Heart right ventricle (tissue), 16 donors: ENCODE measurements at regions of chr10 and their contacts with region 1.

Region 1: DNA sequence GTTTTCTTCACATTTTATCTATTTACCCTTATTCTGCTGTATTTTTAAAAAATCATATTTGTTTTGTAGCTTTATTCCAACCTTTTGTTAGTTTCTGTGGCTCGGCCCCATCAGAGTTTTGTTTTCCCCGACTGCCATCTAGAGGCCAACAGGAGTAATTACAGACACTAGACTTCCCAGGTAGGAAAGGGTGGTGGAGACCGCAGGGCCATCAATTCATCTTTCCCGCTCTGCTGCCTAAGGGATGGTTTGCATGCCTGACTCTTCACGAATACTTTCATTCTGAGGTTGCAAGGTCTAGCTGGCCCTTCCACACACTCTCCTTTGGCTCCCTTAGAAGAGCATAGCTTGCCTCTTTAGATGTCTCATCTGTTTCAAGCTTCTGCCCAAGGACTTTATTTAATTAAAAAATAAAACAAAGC is 38.3 kb downstream of the LYZL2 start:
- DNase-seq: peak in 1 of 2 donors; percentile 19
- ATAC-seq: peak in 6 of 8 donors; percentile 42 to 72 (median 58)
- H3K4me3 ChIP-seq: no peak overlapping the region
- H3K27ac ChIP-seq: no peak overlapping the region
- H3K4me1 ChIP-seq: peaks cover 0 to 21% (median 0%) of the 10 kb centered on the region in 9 donors
- H3K27me3 ChIP-seq: peaks cover 0 to 5% (median 0%) of the 10 kb centered on the region in 7 donors
- CTCF ChIP-seq: peak; percentile 62 to 92 (median 81)

Region 2: GRCh38 chr10:30384701-30385201 is 206.5 kb before region 1 on chr10:
- intact Hi-C with region 1: loop called in 1 of 10 experiments (anchors 2 kb)
- DNase-seq: no peak
- ATAC-seq: peak in 4 of 8 donors; percentile 29 to 57 (median 44)
- H3K4me3 ChIP-seq: no peak overlapping the region
- H3K27ac ChIP-seq: no peak overlapping the region
- H3K4me1 ChIP-seq: peaks cover 0 to 16% (median 5%) of the 10 kb centered on the region in 9 donors
- H3K27me3 ChIP-seq: no peaks in the 10 kb centered on the region
- CTCF ChIP-seq: peak in 7 of 9 donors; percentile 31 to 50 (median 44)

Region 3: GRCh38 chr10:30392564-30392990 is 198.7 kb before region 1 on chr10:
- intact Hi-C with region 1: loop called (anchors 1 to 5 kb)
- DNase-seq: peak; percentile 66 to 67
- ATAC-seq: peak; percentile 94 to 99 (median 98)
- H3K4me3 ChIP-seq: peak overlapping the region in 3 of 10 donors; percentile 7 to 23 (median 19)
- H3K27ac ChIP-seq: no peak overlapping the region
- H3K4me1 ChIP-seq: peaks cover 0 to 20% (median 6%) of the 10 kb centered on the region in 9 donors
- H3K27me3 ChIP-seq: peaks cover 0 to 7% (median 0%) of the 10 kb centered on the region in 7 donors
- CTCF ChIP-seq: peak; percentile 85 to 97 (median 96)

Region 4: GRCh38 chr10:30398788-30399187 is 192.5 kb before region 1 on chr10:
- intact Hi-C with region 1: loop called in 6 of 10 experiments (anchors 2 to 5 kb)
- DNase-seq: no peak
- ATAC-seq: no peak
- H3K4me3 ChIP-seq: no peak overlapping the region
- H3K27ac ChIP-seq: no peak overlapping the region
- H3K4me1 ChIP-seq: peaks cover 0 to 12% (median 7%) of the 10 kb centered on the region in 9 donors
- H3K27me3 ChIP-seq: no peaks in the 10 kb centered on the region
- CTCF ChIP-seq: peak in 1 of 9 donors; percentile 6

Region 5: GRCh38 chr10:30413996-30414576 is 177.2 kb before region 1 on chr10:
- intact Hi-C with region 1: loop called in 3 of 10 experiments (anchors 5 kb)
- DNase-seq: peak in 1 of 2 donors; percentile 57
- ATAC-seq: peak in 6 of 8 donors; percentile 67 to 79 (median 75)
- H3K4me3 ChIP-seq: no peak overlapping the region
- H3K27ac ChIP-seq: no peak overlapping the region
- H3K4me1 ChIP-seq: peaks cover 0 to 27% (median 7%) of the 10 kb centered on the region in 9 donors
- H3K27me3 ChIP-seq: no peaks in the 10 kb centered on the region
- CTCF ChIP-seq: peak; percentile 74 to 85 (median 76)